OCI-LY7 (cell line): ENCODE measurements at regions of chr7 and their contacts with region 1.

Region 1: DNA sequence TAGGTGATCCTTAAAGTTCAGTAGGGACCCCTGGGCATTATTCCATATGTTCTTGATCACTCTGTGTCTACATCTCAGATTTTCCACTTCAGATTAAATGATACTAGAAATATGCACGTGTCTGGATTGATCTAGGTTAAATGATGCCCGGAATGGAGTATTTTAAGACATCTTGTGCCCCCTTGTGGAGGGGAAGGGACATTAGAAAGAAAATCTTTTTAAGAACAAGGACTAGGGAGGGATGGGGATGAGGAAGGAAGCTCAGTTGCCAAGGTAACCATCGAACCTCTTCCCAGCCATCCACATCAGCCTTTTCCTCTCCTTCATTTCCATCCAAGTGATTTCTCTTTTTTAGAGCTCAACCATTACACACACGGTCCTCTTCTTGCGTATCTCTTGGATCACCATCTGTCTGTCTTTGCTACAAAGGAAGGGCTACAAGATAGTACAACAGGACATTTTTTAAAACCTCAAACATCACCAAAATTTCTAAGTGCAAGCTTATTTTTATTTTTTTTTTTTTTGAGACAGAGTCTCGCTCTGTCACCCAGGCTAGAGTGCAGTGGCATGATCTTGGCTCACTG is 40.5 kb downstream of the PRSS2 start:
- DNase-seq: peak; percentile 85
- H3K4me3 ChIP-seq: no peak overlapping the region
- H3K27ac ChIP-seq: peak overlapping the region; percentile 100
- H3K4me1 ChIP-seq: peaks cover 74% of the 10 kb centered on the region
- CTCF ChIP-seq: peak; percentile 89

Region 2: GRCh38 chr7:142001163-142001874 is 809.9 kb before region 1 on chr7:
- CTCF ChIA-PET with region 1: no interaction called
- POLR2A ChIA-PET with region 1: no interaction called
- intact Hi-C with region 1: no loop called
- DNase-seq: no peak
- H3K4me3 ChIP-seq: no peak overlapping the region
- H3K27ac ChIP-seq: no peak overlapping the region
- H3K4me1 ChIP-seq: no peaks in the 10 kb centered on the region
- CTCF ChIP-seq: no peak

Region 3: GRCh38 chr7:142689439-142690120 is 121.7 kb before region 1 on chr7:
- CTCF ChIA-PET with region 1: no interaction called
- POLR2A ChIA-PET with region 1: interaction called, 7 read pairs
- intact Hi-C with region 1: loop called (anchors 2 kb)
- DNase-seq: peak; percentile 50
- H3K4me3 ChIP-seq: no peak overlapping the region
- H3K27ac ChIP-seq: no peak overlapping the region
- H3K4me1 ChIP-seq: peaks cover 7% of the 10 kb centered on the region
- CTCF ChIP-seq: peak; percentile 85

Region 4: GRCh38 chr7:142739923-142740492 is 71.2 kb before region 1 on chr7:
- CTCF ChIA-PET with region 1: no interaction called
- POLR2A ChIA-PET with region 1: interaction called, 3 read pairs
- intact Hi-C with region 1: loop called (anchors 2 kb)
- DNase-seq: peak; percentile 84
- H3K4me3 ChIP-seq: peak overlapping the region; percentile 10
- H3K27ac ChIP-seq: no peak overlapping the region
- H3K4me1 ChIP-seq: peaks cover 28% of the 10 kb centered on the region
- CTCF ChIP-seq: peak; percentile 75

Region 5: GRCh38 chr7:142788303-142789289 is 22.6 kb before region 1 on chr7:
- CTCF ChIA-PET with region 1: interaction called, 67 read pairs
- POLR2A ChIA-PET with region 1: interaction called, 666 read pairs
- intact Hi-C with region 1: loop called (anchors 1 kb)
- DNase-seq: no peak
- H3K4me3 ChIP-seq: no peak overlapping the region
- H3K27ac ChIP-seq: no peak overlapping the region
- H3K4me1 ChIP-seq: peaks cover 95% of the 10 kb centered on the region
- CTCF ChIP-seq: no peak

Region 6: DNA sequence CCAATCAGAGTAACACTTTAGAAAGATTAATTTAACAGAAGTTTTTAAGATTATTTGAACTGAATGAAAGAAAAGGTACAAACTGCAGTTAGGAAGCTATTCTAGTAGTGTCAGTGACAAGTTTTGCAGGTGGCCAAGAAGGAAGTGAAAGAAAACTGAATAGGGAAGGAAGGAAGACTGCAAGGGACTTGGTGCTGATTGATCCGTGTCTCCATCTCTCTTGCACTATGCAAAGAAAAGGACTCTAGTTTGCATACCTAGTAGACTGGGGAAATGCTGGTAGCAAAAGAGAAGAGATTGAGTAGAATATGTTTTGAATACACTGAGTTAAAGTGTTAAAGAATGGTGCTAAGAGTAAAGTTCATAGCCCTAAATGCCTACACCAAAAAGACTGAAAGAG is 273.9 kb after region 1 on chr7:
- CTCF ChIA-PET with region 1: interaction called, 3 read pairs
- POLR2A ChIA-PET with region 1: interaction called, 3 read pairs
- intact Hi-C with region 1: loop called (anchors 10 kb)
- DNase-seq: peak; percentile 88
- H3K4me3 ChIP-seq: peak overlapping the region; percentile 24
- H3K27ac ChIP-seq: peak overlapping the region; percentile 95
- H3K4me1 ChIP-seq: peaks cover 40% of the 10 kb centered on the region
- CTCF ChIP-seq: no peak